PC-3 (cell line): ENCODE measurements at regions of chr5 and their contacts with region 1.

Region 1: GRCh38 chr5:82754759-82755158 is 322.4 kb downstream of the TMEM167A start:
- DNase-seq: no peak
- ATAC-seq: peak; percentile 51
- H3K4me3 ChIP-seq: no peak overlapping the region
- H3K27ac ChIP-seq: peak overlapping the region; percentile 52
- H3K4me1 ChIP-seq: peaks cover 20% of the 10 kb centered on the region
- H3K27me3 ChIP-seq: no peaks in the 10 kb centered on the region
- CTCF ChIP-seq: no peak

Region 2: GRCh38 chr5:82735160-82735789 is 19.5 kb before region 1 on chr5:
- CTCF ChIA-PET with region 1: no interaction called
- POLR2A ChIA-PET with region 1: no interaction called
- intact Hi-C with region 1: loop called (anchors 1 kb)
- DNase-seq: peak; percentile 80
- ATAC-seq: peak; percentile 100
- H3K4me3 ChIP-seq: no peak overlapping the region
- H3K27ac ChIP-seq: peak overlapping the region; percentile 37
- H3K4me1 ChIP-seq: peaks cover 10% of the 10 kb centered on the region
- H3K27me3 ChIP-seq: no peaks in the 10 kb centered on the region
- CTCF ChIP-seq: no peak